SK-N-SH (cell line): ENCODE measurements at regions of chr6 and their contacts with region 1.

Region 1: GRCh38 chr6:44655412-44656342 is 268.2 kb downstream of the CDC5L start:
- DNase-seq: peak; percentile 79
- H3K4me3 ChIP-seq: peak overlapping the region in 1 of 2 experiments; percentile 44; a peak in 1 of 4 replicates
- H3K27ac ChIP-seq: no peak overlapping the region
- H3K4me1 ChIP-seq: peaks cover 2 to 4% of the 10 kb centered on the region in 2 experiments; a peak in 3 of 4 replicates
- H3K27me3 ChIP-seq: no peaks in the 10 kb centered on the region
- CTCF ChIP-seq: peak; percentile 96
- EP300 ChIP-seq: no peak
- RAD21 ChIP-seq: peak; percentile 95

Region 2: GRCh38 chr6:43506667-43507471 is 1148.8 kb before region 1 on chr6:
- CTCF ChIA-PET with region 1: no interaction called
- POLR2A ChIA-PET with region 1: no interaction called
- DNase-seq: peak; percentile 89
- H3K4me3 ChIP-seq: no peak overlapping the region; a peak in 1 of 4 replicates
- H3K27ac ChIP-seq: no peak overlapping the region; a peak in 1 of 4 replicates
- H3K4me1 ChIP-seq: peaks cover 0 to 26% of the 10 kb centered on the region in 2 experiments; a peak in 1 of 4 replicates
- H3K27me3 ChIP-seq: no peaks in the 10 kb centered on the region
- CTCF ChIP-seq: peak; percentile 91
- EP300 ChIP-seq: 0 out of 4 replicates have a peak, but pooled peaks of 1 of the 2 experiments have one; percentile 16
- RAD21 ChIP-seq: peak; percentile 94

Region 3: GRCh38 chr6:44543664-44544063 is 112.0 kb before region 1 on chr6:
- CTCF ChIA-PET with region 1: no interaction called
- POLR2A ChIA-PET with region 1: no interaction called
- DNase-seq: no peak
- H3K4me3 ChIP-seq: no peak overlapping the region
- H3K27ac ChIP-seq: no peak overlapping the region
- H3K4me1 ChIP-seq: no peaks in the 10 kb centered on the region; a peak in 1 of 4 replicates
- H3K27me3 ChIP-seq: peaks cover 8% of the 10 kb centered on the region; the same call in 1 of the 2 replicates
- CTCF ChIP-seq: no peak
- EP300 ChIP-seq: no peak
- RAD21 ChIP-seq: no peak

Region 4: DNA sequence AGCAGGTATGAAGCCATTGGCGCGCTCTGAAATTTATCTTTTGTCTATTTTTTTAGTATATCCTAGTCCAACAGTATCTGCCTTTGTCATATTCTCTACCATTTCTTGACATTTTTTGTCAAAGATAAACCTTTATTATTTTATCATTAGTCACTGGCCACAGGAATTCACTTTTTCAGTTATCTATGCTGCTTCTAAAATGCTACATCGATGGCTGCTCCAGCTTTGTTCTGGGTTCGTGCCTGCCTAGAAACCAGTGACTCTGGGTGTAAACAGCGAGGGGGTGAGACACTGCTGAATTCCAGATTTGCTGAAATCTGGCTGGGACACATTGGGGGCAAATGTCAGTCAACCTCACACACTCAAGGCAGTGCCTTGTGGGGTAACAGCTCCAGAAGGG is 74.8 kb before region 1 on chr6:
- CTCF ChIA-PET with region 1: no interaction called
- POLR2A ChIA-PET with region 1: no interaction called
- DNase-seq: no peak
- H3K4me3 ChIP-seq: no peak overlapping the region
- H3K27ac ChIP-seq: peak overlapping the region in 1 of 2 experiments; percentile 44; a peak in 2 of 4 replicates
- H3K4me1 ChIP-seq: peaks cover 0 to 5% of the 10 kb centered on the region in 2 experiments; a peak in 1 of 4 replicates
- H3K27me3 ChIP-seq: no peaks in the 10 kb centered on the region
- CTCF ChIP-seq: no peak
- EP300 ChIP-seq: no peak
- RAD21 ChIP-seq: no peak

Region 5: DNA sequence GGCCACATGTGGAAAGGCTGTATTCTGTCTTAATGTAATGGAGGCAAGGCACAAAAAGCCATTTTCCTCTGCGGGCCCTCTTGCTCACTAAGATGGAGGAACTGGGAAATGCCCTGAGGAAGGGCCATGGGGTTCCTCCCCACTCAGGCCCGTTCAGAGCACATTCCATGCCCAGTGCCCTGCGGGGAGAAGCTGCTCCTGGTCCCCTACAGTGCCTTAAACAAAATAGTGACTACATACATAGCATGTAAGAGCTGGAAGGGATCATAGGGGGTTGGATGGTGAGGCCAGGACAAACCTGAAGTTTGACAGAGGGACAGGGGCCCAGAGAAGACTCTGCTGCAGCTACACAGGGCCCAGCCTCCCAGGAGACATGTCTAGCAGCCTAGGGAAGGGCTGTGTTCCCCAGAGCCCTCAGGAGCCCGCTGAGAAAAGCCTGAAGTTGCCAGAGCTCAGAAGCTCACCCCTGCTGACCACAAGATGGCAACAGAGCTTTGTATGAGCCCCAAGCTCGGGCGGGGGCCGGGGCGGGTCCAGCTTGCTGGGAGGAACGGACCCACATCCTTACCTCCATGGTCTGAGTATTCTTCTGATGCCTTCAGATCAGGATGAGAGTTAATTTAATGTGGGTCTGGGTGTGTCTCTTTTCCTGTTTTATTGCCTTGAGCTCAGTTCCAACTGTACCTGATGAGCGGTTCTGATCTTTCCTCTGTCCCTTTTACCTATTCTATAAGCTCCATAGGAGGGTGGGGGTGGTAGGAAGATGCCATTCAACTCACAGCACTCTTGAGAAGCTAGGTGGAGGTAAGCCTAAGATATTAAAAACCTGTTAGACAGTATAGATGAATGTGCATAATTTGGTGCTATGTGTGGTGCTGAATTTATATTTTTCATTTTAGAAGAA is 25.3 kb before region 1 on chr6:
- CTCF ChIA-PET with region 1: interaction called, 12 read pairs
- POLR2A ChIA-PET with region 1: no interaction called
- DNase-seq: peak; percentile 76
- H3K4me3 ChIP-seq: no peak overlapping the region
- H3K27ac ChIP-seq: no peak overlapping the region
- H3K4me1 ChIP-seq: no peaks in the 10 kb centered on the region
- H3K27me3 ChIP-seq: no peaks in the 10 kb centered on the region
- CTCF ChIP-seq: peak; percentile 78
- EP300 ChIP-seq: no peak
- RAD21 ChIP-seq: peak; percentile 77

Region 6: DNA sequence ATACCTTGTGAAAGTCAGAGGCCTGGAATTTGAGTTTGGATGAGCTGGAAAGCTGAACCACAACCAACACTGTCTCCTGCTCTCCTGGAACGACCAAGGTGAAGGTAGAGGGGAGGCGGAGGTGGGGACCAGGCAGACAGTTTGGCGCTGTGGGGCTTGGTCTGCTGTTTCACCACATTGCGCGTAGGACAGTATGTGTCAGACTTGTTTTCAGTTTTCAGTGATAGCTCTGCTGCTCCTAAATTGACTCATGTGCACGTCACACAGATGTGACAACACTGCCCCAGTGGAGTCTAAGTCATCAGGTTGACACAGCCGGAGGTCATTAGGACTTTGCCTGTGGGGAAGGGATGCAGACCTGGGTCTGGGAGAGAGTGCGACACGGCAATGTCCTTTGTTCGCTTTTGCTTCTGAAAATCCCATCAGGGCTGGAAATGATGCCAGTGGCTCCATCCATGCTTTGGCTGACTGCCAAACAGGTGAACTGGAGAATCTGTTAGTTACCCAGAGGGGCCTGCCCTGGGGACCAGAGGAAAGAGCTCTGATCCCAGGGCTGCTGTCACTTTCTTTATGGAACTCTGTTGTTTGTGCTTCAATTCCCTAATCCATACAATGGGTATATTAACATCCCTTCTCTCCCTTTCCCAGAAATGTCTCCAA is 12.7 kb before region 1 on chr6:
- CTCF ChIA-PET with region 1: interaction called, 15 read pairs
- POLR2A ChIA-PET with region 1: no interaction called
- DNase-seq: no peak
- H3K4me3 ChIP-seq: no peak overlapping the region
- H3K27ac ChIP-seq: no peak overlapping the region
- H3K4me1 ChIP-seq: no peaks in the 10 kb centered on the region; a peak in 1 of 4 replicates
- H3K27me3 ChIP-seq: no peaks in the 10 kb centered on the region
- CTCF ChIP-seq: no peak
- EP300 ChIP-seq: no peak
- RAD21 ChIP-seq: no peak

Region 7: DNA sequence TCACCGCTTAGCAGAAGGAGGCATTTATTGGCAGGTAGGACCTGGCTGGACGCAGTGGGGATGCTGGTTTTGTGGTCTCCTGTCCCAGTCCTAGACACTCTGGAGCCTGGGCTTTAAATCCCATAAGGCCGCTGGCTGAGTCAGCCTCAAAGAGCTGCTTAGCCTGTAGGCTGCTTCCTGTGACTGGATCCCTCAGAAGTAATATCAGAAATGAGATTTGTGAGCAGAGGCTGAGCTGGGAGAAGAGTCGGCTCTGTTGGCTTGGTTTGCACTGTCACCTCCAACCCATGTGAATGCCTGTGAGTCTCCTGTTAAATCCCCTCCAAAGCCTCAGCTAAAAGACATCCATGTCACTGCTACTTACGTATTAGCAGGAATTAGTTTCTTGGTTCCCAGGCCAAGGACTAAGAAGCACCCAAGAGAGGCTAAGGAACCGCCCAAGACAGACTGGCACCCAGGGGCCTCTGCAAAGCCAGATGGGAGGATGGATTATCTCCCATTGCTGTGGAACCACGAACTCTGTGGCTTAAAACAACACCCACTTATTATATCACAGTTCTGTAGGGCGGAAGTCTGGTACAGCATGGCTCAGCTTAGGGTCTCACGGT is 21.3 kb after region 1 on chr6:
- CTCF ChIA-PET with region 1: interaction called, 10 read pairs
- POLR2A ChIA-PET with region 1: no interaction called
- DNase-seq: no peak
- H3K4me3 ChIP-seq: no peak overlapping the region
- H3K27ac ChIP-seq: no peak overlapping the region; a peak in 1 of 4 replicates
- H3K4me1 ChIP-seq: no peaks in the 10 kb centered on the region
- H3K27me3 ChIP-seq: no peaks in the 10 kb centered on the region
- CTCF ChIP-seq: no peak
- EP300 ChIP-seq: no peak
- RAD21 ChIP-seq: no peak

Region 8: DNA sequence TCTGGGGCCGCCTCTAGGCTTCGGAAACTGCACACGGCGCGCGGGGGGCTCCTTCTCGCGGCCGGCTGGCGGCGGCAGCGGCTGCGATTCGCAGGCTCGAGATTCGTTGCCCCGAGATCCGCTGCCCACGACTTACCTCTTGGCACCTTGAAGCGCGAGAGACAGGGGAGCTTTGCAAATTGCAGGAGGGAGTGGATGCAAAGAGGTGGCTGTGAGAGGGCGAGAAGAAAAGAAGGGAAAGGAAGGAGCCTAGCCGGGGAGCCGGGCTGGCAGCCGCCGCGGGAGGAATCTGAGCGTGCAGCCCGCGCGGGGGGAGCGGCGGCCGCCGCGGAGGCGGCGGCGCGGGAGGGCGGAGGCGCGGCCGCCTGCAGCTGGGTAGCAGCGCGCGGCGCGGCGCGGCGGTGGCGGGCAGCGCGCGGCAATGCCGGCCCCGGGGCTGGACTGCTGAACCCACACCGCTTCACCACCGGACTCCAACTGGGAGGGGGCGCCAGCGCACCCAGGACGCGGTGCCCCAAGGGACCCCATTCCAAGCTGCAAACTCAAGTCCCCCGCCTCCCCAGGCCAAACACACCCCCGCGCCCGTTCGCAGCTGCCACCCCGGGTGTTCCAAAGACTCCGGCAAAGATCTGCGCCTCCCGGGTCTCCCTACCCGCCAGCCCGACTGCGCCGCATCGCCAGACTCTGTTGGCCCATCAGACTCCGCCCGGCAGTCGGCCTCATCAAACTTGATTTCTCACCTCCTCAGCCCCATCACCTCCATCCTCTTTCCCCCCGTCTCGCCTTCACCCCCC is 766.2 kb after region 1 on chr6:
- CTCF ChIA-PET with region 1: interaction called, 13 read pairs
- POLR2A ChIA-PET with region 1: no interaction called
- DNase-seq: peak; percentile 76
- H3K4me3 ChIP-seq: peak overlapping the region; percentile 61 to 89
- H3K27ac ChIP-seq: peak overlapping the region in 1 of 2 experiments; percentile 67; a peak in 2 of 4 replicates
- H3K4me1 ChIP-seq: peaks cover 7 to 16% of the 10 kb centered on the region in 2 experiments; a peak in 2 of 4 replicates
- H3K27me3 ChIP-seq: no peaks in the 10 kb centered on the region
- CTCF ChIP-seq: peak; percentile 44; the same call in 1 of the 2 replicates
- EP300 ChIP-seq: peak in 1 of 2 experiments; percentile 27; a peak in 1 of 4 replicates
- RAD21 ChIP-seq: no peak